Activated CD4-positive, alpha-beta T cell treated with anti-CD3 and anti-CD28 coated beads for 36 hours (primary cell): ENCODE measurements at regions of chr1 and their contacts with region 1.

Region 1: DNA sequence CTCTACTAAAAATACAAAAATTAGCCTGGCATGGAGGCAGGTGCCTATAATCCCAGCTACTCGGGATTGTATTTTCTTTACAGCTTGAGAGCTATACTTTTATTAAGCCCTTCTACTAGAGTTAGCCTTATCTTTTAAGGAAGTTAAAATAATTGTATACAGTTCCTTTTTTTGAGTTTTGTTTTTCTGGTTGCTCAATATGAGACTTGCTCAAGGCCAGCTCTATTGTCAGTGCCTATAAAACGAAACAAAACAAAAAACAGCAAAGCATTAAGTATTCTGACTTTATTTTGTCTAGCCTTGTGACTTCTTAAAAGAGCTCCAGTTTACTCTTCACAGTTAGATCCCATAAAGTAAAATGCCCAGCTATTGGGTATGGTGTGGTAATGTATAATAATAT is 17.2 kb downstream of the PKN2 start:
- DNase-seq: no peak
- ATAC-seq: no peak
- H3K4me3 Mint-ChIP-seq: no peak overlapping the region
- H3K27ac Mint-ChIP-seq: no peak overlapping the region
- H3K4me1 Mint-ChIP-seq: peaks cover 29% of the 10 kb centered on the region
- H3K27me3 Mint-ChIP-seq: no peaks in the 10 kb centered on the region

Region 2: DNA sequence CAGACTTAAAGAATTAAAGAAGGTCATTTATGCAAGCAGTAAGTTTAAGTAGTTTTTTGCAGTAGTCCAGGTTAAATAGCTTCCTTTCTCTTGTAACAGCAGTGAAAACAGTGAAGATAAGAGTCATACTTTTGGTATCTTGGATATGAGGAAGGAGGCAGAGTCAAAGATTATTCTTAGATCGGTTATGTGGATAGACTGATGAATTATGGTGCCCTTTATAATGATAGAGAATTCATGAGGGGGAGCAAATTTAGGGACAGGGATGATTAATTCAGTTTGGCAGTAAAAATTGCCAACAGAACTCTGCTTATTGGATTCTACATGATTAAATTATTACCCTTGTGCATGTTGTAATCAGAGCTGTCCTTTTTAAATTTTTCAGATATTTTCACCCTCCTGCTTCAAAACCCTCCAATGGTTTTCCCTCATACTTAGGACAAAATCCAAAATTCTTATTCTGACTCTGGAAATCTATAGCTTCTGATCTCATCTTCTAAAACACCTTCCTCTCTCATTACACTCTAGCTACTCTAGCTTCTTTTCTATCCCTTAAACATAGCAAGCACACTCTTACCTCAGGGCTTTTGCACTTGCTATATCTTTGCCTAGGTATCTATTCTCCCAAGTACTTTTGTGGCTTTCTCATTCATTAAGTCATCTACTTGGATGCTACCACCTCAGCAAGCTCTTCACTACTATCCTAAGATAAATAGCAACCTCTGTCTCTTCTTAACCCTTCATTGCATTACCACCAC is 62.6 kb after region 1 on chr1:
- CTCF ChIA-PET with region 1: no interaction called
- POLR2A ChIA-PET with region 1: no interaction called
- intact Hi-C with region 1: loop called in 1 of 2 experiments (anchors 2 kb)
- DNase-seq: no peak
- ATAC-seq: no peak
- H3K4me3 Mint-ChIP-seq: no peak overlapping the region
- H3K27ac Mint-ChIP-seq: no peak overlapping the region
- H3K4me1 Mint-ChIP-seq: peaks cover 6% of the 10 kb centered on the region
- H3K27me3 Mint-ChIP-seq: no peaks in the 10 kb centered on the region